ENCODE measurements at regions of chr1 and their contacts with region 1.

Region 1: GRCh38 chr1:46667782-46668760 is at the start of gene ATPAF1:
- DNase-seq: peak; percentile 90
- H3K4me3 ChIP-seq: peak within 1 kb of the TSS; percentile 51 to 96 (median 89)
- H3K27ac ChIP-seq: peak within 1 kb of the TSS; percentile 81 to 94 (median 87)
- H3K4me1 ChIP-seq: peaks cover 0 to 27% (median 22%) of the 10 kb centered on the region in 4 donors
- H3K27me3 ChIP-seq: no peaks in the 10 kb centered on the region
- CTCF ChIP-seq: no peak
- EP300 ChIP-seq: no peak
- POLR2A ChIP-seq: no peak
- total RNA-seq, gene ATPAF1: 52.8 to 67.8 (median 61.2) TPM

Region 2: GRCh38 chr1:46539972-46540371 is 128.1 kb before region 1 on chr1:
- intact Hi-C with region 1: no loop called
- DNase-seq: no peak
- H3K4me3 ChIP-seq: no peak overlapping the region
- H3K27ac ChIP-seq: no peak overlapping the region
- H3K4me1 ChIP-seq: peaks cover 0 to 11% (median 9%) of the 10 kb centered on the region in 4 donors
- H3K27me3 ChIP-seq: peaks cover 17 to 23% (median 22%) of the 10 kb centered on the region in 3 donors
- CTCF ChIP-seq: no peak
- EP300 ChIP-seq: no peak
- POLR2A ChIP-seq: no peak

Region 3: DNA sequence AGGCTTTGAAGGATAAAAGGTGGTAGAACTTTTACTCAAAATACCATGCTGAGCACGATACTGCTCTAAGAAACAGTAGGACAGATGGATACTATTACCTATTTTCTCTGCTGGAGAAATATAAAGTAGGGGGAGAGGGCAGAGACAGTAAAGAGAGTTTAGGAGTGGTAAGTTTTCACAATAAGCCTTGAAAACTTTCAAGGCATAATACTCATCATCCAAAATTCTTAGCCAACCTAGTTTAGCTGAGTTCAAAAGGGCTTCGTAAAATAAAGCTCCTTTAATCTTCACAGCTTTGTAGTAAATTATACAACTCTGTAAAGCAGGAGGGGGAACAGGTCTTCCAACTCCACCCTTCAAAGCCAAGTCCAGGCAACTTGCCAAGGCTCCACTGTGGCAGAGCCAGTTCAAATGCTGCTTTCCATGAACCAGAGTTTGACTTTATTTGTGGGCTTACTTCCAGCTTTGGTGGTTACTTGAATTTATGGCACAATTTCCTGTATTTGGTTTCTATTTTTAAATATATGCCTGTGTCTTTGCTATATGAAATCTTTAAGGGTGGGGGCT is 19.1 kb after region 1 on chr1:
- intact Hi-C with region 1: loop called (anchors 2 kb)
- DNase-seq: peak; percentile 92
- H3K4me3 ChIP-seq: no peak overlapping the region
- H3K27ac ChIP-seq: peak overlapping the region; percentile 2 to 65 (median 56)
- H3K4me1 ChIP-seq: peaks cover 0 to 35% (median 23%) of the 10 kb centered on the region in 4 donors
- H3K27me3 ChIP-seq: no peaks in the 10 kb centered on the region
- CTCF ChIP-seq: no peak
- EP300 ChIP-seq: no peak
- POLR2A ChIP-seq: no peak